ENCODE measurements at regions of chr16 and their contacts with region 1.

Region 1: DNA sequence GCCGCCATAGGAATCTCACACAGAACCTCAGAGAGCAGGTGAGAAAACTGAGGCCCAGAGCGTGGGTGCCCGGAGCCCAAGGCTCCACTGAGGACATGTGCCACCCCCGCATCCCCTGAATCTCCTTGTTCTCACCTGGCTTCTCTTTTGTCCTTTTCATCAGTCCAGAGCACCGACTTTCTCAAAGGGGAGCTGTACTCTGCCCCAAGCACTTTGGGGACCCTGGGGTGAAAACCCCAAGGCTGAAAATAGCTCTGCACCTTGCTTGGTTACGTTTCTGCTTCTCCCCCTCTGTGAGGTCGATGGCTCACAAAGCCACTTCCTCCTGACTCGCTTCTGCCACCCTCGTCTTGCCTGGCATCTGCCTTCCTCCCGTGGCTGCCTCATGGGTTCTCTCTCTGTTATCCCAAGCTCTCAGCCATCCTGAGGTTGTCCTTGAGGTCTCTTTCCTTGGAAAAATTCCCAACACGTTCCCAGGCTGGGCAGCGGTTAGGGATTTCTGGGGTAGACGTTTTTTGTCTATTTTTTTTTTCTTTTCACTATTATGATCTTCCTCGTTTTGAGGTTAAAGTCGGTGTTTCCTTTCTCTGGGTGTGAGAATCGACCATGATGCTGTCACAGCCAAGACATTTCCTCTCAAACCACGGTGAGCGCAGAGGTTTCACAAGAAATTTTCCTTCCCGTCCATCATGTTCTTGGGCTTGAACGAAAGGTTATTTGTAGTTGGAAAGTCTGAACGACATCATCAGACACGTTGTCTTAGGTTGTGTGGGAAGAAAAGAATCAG is 37.2 kb downstream of the IRF8 start:
- DNase-seq: peak; percentile 40 to 80 (median 74)
- ATAC-seq: peak; percentile 91
- H3K4me3 ChIP-seq: peak overlapping the region; percentile 52
- H3K4me3 Mint-ChIP-seq: peak overlapping the region; percentile 72 to 88 (median 82)
- H3K27ac ChIP-seq: peak overlapping the region; percentile 68
- H3K27ac Mint-ChIP-seq: peak overlapping the region; percentile 91 to 98 (median 95)
- H3K4me1 ChIP-seq: peaks cover 25 to 29% of the 10 kb centered on the region in 2 donors
- H3K4me1 Mint-ChIP-seq: peaks cover 34 to 54% (median 40%) of the 10 kb centered on the region in 7 donors
- H3K27me3 ChIP-seq: no peaks in the 10 kb centered on the region
- H3K27me3 Mint-ChIP-seq: peaks cover 0 to 3% (median 0%) of the 10 kb centered on the region in 5 donors

Region 2: DNA sequence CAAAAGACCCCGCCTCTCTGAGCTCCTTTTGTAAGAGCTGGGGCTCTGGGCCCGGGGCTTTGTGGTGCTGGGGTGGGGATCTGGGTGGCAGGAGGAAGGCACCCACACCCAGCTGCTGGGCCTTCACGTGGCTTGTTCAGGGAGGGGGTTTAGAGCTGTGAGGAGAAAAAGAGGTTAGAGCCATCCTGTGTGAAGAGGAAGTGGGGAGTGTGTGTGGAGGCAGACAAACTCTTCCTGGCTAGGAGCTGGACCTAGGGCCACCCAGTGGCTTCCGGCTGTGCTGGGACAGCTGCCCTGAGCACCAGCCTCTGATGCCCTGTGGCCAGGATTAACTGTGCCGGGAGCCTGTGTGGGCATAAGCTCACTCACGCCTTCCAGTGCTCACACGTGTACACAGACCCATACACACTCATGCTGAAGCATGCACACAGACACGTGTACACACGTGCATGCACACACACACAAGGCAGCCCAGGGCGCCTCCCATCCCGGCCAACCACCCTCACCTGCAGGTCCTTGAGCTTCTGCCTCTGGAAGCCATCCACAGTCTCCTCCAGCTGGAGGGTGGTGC is 831.3 kb before region 1 on chr16:
- CTCF ChIA-PET with region 1: no interaction called
- POLR2A ChIA-PET with region 1: no interaction called
- intact Hi-C with region 1: no loop called
- DNase-seq: peak in 6 of 9 donors; percentile 16 to 54 (median 46)
- ATAC-seq: peak; percentile 87
- H3K4me3 ChIP-seq: no peak overlapping the region
- H3K4me3 Mint-ChIP-seq: peak overlapping the region; percentile 16 to 80 (median 72)
- H3K27ac ChIP-seq: peak overlapping the region; percentile 49
- H3K27ac Mint-ChIP-seq: peak overlapping the region; percentile 54 to 96 (median 90)
- H3K4me1 ChIP-seq: peaks cover 26 to 40% of the 10 kb centered on the region in 2 donors
- H3K4me1 Mint-ChIP-seq: peaks cover 16 to 50% (median 47%) of the 10 kb centered on the region in 7 donors
- H3K27me3 ChIP-seq: no peaks in the 10 kb centered on the region
- H3K27me3 Mint-ChIP-seq: no peaks in the 10 kb centered on the region

Region 3: GRCh38 chr16:85898521-85899442 is 37.4 kb before region 1 on chr16 and contains the start of gene IRF8:
- CTCF ChIA-PET with region 1: interaction called, 4 read pairs
- POLR2A ChIA-PET with region 1: interaction called, 7 read pairs
- intact Hi-C with region 1: loop called (anchors 1 kb)
- DNase-seq: peak; percentile 55 to 86 (median 65)
- ATAC-seq: peak; percentile 79
- H3K4me3 ChIP-seq: peak within 1 kb of the TSS; percentile 51
- H3K4me3 Mint-ChIP-seq: peak within 1 kb of the TSS; percentile 79 to 92 (median 88)
- H3K27ac ChIP-seq: peak within 1 kb of the TSS; percentile 60
- H3K27ac Mint-ChIP-seq: peak within 1 kb of the TSS; percentile 13 to 83 (median 64)
- H3K4me1 ChIP-seq: peaks cover 18 to 23% of the 10 kb centered on the region in 2 donors
- H3K4me1 Mint-ChIP-seq: peaks cover 37 to 55% (median 51%) of the 10 kb centered on the region in 7 donors
- H3K27me3 ChIP-seq: no peaks in the 10 kb centered on the region
- H3K27me3 Mint-ChIP-seq: peaks cover 0 to 9% (median 0%) of the 10 kb centered on the region in 5 donors
- total RNA-seq, gene IRF8: 3.5 to 105 (median 19.9) TPM

Region 4: GRCh38 chr16:85947230-85948137 is 11.3 kb after region 1 on chr16:
- CTCF ChIA-PET with region 1: interaction called, 6 read pairs
- POLR2A ChIA-PET with region 1: no interaction called
- intact Hi-C with region 1: loop called (anchors 1 kb)
- DNase-seq: peak in 5 of 9 donors; percentile 11 to 32 (median 19)
- ATAC-seq: peak; percentile 55
- H3K4me3 ChIP-seq: peak overlapping the region; percentile 81
- H3K4me3 Mint-ChIP-seq: peak overlapping the region; percentile 78 to 92 (median 88)
- H3K27ac ChIP-seq: peak overlapping the region; percentile 47
- H3K27ac Mint-ChIP-seq: peak overlapping the region in 8 of 9 donors; percentile 60 to 92 (median 79)
- H3K4me1 ChIP-seq: peaks cover 14 to 22% of the 10 kb centered on the region in 2 donors
- H3K4me1 Mint-ChIP-seq: peaks cover 25 to 42% (median 34%) of the 10 kb centered on the region in 7 donors
- H3K27me3 ChIP-seq: no peaks in the 10 kb centered on the region
- H3K27me3 Mint-ChIP-seq: peaks cover 0 to 20% (median 0%) of the 10 kb centered on the region in 5 donors

Region 5: DNA sequence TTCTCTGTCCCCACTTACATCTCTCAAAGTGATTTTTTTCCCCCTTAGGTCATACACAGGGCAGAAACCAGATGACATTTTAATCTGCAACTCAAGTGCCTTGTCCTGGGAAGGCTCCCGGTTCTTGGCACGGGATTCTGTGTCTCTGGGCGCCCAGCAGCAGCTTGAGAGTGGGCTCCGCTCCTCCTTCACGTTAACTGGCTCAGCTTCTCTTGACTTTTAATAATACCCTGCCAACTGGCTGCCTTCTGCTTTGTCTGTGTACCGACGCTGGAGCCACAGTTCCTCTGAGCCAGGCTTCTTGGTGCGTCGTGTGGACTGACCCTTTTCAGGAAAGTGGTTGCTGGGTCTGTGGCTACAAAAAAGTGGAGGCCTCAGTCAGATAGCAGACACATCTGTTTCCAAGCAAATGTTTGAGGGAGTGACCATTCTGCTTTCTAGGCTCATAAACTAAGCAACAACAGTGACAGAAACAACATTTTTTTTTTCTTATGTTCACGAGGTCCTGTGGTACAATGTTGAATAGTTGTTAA is 27.7 kb after region 1 on chr16:
- CTCF ChIA-PET with region 1: no interaction called
- POLR2A ChIA-PET with region 1: no interaction called
- intact Hi-C with region 1: no loop called
- DNase-seq: no peak
- ATAC-seq: no peak
- H3K4me3 ChIP-seq: no peak overlapping the region
- H3K4me3 Mint-ChIP-seq: no peak overlapping the region
- H3K27ac ChIP-seq: no peak overlapping the region
- H3K27ac Mint-ChIP-seq: peak overlapping the region in 1 of 9 donors; percentile 55
- H3K4me1 ChIP-seq: no peaks in the 10 kb centered on the region
- H3K4me1 Mint-ChIP-seq: peaks cover 0 to 4% (median under 1%) of the 10 kb centered on the region in 7 donors
- H3K27me3 ChIP-seq: no peaks in the 10 kb centered on the region
- H3K27me3 Mint-ChIP-seq: no peaks in the 10 kb centered on the region

Region 6: DNA sequence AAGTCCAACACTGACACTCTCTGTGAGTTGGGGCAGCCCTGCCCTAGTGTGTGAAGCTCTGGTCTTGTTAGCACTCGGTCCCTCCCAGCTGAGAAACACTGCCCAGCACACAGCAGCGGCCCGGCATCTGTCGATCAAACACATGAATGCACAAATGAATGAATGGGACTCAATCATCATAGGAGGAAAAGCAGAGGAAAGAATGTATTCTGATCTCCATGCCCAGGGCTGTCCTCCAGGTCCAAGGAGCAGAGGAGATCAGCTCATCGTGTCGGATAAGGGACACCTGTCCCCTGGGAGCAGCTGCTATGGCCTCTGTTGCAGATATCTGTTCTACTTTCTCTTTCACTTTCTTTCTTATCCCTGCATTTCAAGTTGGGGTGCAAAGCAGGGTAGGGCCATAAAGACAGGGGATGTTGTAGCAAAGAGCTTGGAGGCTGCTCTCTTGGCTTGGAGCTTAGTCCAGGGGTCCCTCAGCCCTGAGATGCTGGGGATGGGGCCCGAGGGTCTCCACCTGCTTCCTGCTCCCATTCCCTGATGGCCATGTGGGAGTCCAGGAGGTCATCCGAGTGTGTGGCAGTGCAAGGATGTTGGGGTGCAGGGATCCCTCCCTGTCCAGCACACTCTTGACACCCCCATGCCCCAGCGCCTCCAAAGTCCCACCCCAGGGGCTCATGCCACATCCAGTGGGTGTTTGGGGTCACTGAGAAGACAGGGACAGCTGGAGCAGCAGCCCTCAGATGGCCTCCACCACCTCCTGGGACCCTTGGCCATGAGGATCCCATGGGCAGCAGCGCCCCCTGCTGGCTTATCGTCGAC is 51.0 kb after region 1 on chr16:
- CTCF ChIA-PET with region 1: interaction called, 5 read pairs
- POLR2A ChIA-PET with region 1: interaction called, 3 read pairs
- intact Hi-C with region 1: loop called (anchors 5 kb)
- DNase-seq: peak in 7 of 9 donors; percentile 11 to 44 (median 26)
- ATAC-seq: no peak
- H3K4me3 ChIP-seq: no peak overlapping the region
- H3K4me3 Mint-ChIP-seq: peak overlapping the region in 1 of 10 donors; percentile 56
- H3K27ac ChIP-seq: no peak overlapping the region
- H3K27ac Mint-ChIP-seq: peak overlapping the region in 1 of 9 donors; percentile 81
- H3K4me1 ChIP-seq: peaks cover 3 to 4% of the 10 kb centered on the region in 2 donors
- H3K4me1 Mint-ChIP-seq: peaks cover 0 to 53% (median 6%) of the 10 kb centered on the region in 7 donors
- H3K27me3 ChIP-seq: no peaks in the 10 kb centered on the region
- H3K27me3 Mint-ChIP-seq: peaks cover 0 to 16% (median 5%) of the 10 kb centered on the region in 5 donors

Measured in naive thymus-derived CD4-positive, alpha-beta T cell (primary cell).